Activated CD4-positive, alpha-beta T cell treated with anti-CD3 and anti-CD28 coated beads, Interleukin-2, amount 10 ng/mL, durations not matched to agents 24 days and 14 days (primary cell): ENCODE measurements at regions of chr10 and their contacts with region 1.

Region 1: GRCh38 chr10:28569506-28570159 is 36.7 kb downstream of the WAC start:
- DNase-seq: no peak
- H3K4me3 Mint-ChIP-seq: no peak overlapping the region
- H3K27ac Mint-ChIP-seq: peak overlapping the region; percentile 87
- H3K4me1 Mint-ChIP-seq: peaks cover 44% of the 10 kb centered on the region
- H3K27me3 Mint-ChIP-seq: no peaks in the 10 kb centered on the region

Region 2: GRCh38 chr10:28551086-28551485 is 18.5 kb before region 1 on chr10:
- intact Hi-C with region 1: loop called (anchors 2 kb)
- DNase-seq: no peak
- H3K4me3 Mint-ChIP-seq: no peak overlapping the region
- H3K27ac Mint-ChIP-seq: peak overlapping the region; percentile 41
- H3K4me1 Mint-ChIP-seq: peaks cover 56% of the 10 kb centered on the region
- H3K27me3 Mint-ChIP-seq: no peaks in the 10 kb centered on the region

Region 3: DNA sequence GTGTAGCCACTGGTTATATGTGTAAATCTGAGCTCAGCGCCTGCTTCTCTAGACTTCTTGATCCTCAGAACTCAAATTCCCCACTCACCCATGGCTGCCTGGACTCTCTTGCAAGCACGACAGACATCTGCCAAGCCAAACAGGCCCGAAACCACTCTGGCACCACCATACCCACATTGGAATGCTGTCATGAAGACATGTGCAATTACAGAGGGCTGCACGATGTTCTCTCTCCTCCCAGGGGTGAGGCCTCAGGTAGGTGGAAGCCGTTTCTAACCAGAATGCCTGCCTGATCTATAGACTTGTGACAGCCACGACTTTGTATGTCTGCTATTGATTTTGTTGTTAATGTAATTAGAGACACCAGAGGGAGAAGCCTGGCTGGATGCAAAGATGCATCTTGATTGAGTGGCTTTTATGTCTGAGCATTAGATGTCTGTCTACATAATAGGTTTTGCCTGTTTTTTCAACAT is 111.7 kb after region 1 on chr10:
- intact Hi-C with region 1: no loop called
- DNase-seq: no peak
- H3K4me3 Mint-ChIP-seq: no peak overlapping the region
- H3K27ac Mint-ChIP-seq: no peak overlapping the region
- H3K4me1 Mint-ChIP-seq: peaks cover 17% of the 10 kb centered on the region
- H3K27me3 Mint-ChIP-seq: peaks cover 64% of the 10 kb centered on the region